CD4-positive, alpha-beta memory T cell (primary cell): ENCODE measurements at regions of chr17 and their contacts with region 1.

Region 1: GRCh38 chr17:45852535-45853297 is 8.0 kb downstream of the SPPL2C start:
- DNase-seq: peak; percentile 41 to 56 (median 49)
- H3K4me3 ChIP-seq: no peak overlapping the region
- H3K4me3 Mint-ChIP-seq: peak overlapping the region in 3 of 8 donors; percentile 10 to 68 (median 21)
- H3K27ac ChIP-seq: no peak overlapping the region
- H3K27ac Mint-ChIP-seq: no peak overlapping the region
- H3K4me1 ChIP-seq: peaks cover 4% of the 10 kb centered on the region
- H3K4me1 Mint-ChIP-seq: peaks cover 0 to 6% (median 2%) of the 10 kb centered on the region in 4 donors
- H3K27me3 ChIP-seq: no peaks in the 10 kb centered on the region
- H3K27me3 Mint-ChIP-seq: peaks cover 16 to 26% of the 10 kb centered on the region in 2 donors

Region 2: DNA sequence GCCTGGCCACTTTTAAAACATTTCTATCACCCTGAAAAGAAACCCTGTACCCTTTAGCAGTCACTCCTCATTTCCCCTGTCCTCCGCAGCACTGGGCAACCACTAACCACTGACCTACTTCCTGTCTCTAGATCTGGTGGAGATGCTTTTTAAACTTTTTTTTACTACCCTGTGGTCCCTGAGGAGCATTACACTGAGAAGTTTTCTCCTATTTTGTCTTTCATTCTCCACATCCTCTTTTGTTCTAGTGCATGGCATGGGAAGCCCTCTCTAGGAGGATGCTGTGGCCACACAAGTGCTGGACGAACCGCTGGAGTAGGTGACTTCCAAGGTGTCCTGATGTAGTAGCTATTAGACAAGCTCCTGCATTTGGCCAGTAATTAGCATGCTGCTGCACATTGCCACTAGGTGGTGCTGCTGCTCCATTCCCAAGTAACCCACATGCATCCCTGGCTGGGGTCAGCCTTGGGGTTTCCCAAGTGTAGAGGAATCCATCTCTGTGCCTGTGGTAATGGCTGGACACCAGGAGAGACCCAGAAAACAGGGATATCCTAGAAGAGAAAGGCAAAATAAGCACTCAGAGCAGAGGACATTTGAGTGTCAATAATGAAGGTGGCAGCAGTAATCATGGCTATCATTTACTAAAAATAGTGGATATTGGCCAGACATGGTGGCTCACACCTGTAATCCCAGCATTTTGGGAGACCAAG is 212.4 kb before region 1 on chr17:
- CTCF ChIA-PET with region 1: interaction called, 7 read pairs
- POLR2A ChIA-PET with region 1: no interaction called
- intact Hi-C with region 1: loop called (anchors 5 kb)
- DNase-seq: peak; percentile 59 to 64 (median 63)
- H3K4me3 ChIP-seq: no peak overlapping the region
- H3K4me3 Mint-ChIP-seq: no peak overlapping the region
- H3K27ac ChIP-seq: no peak overlapping the region
- H3K27ac Mint-ChIP-seq: peak overlapping the region in 3 of 7 donors; percentile 10 to 67 (median 55)
- H3K4me1 ChIP-seq: no peaks in the 10 kb centered on the region
- H3K4me1 Mint-ChIP-seq: peaks cover 6 to 12% (median 6%) of the 10 kb centered on the region in 4 donors
- H3K27me3 ChIP-seq: no peaks in the 10 kb centered on the region
- H3K27me3 Mint-ChIP-seq: no peaks in the 10 kb centered on the region

Region 3: DNA sequence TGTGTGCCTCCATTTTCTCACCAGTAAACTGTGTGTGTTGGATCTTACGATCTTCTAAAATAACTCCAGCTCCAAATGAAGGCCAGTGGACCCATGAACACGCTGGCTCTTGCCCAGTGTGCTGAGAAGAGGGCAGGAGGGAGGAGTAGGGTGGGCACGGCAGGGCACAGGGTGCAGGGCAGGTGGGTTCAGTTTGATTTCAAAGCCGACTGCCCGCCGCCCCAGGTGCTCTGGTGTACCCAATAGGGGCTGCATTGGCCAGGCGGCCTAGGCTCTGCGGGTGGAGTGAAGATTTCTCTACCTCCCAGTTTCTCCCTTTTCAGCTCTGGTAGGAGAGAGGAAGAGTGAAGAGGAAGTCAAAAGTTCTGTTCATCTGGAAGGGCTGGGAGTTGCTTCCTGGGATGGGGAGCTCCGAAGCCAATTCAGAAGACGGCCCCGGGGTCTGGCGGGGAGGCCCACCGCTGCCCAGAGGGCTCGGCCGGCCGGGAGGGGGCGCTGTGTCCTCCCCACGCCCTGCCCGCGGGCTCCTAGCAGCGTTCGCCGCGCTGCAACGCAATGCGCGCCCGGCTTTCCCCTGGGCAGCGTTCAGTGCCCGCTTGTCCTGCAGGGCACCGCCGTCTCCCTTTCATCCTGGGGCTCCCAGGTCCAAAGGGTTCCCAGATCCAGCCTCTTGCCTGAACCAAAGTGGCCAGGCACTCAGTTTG is 69.7 kb before region 1 on chr17:
- CTCF ChIA-PET with region 1: no interaction called
- POLR2A ChIA-PET with region 1: no interaction called
- intact Hi-C with region 1: no loop called
- DNase-seq: peak in 3 of 5 donors; percentile 17 to 25 (median 23)
- H3K4me3 ChIP-seq: no peak overlapping the region
- H3K4me3 Mint-ChIP-seq: peak overlapping the region; percentile 69 to 85 (median 80)
- H3K27ac ChIP-seq: no peak overlapping the region
- H3K27ac Mint-ChIP-seq: no peak overlapping the region
- H3K4me1 ChIP-seq: peaks cover 14% of the 10 kb centered on the region
- H3K4me1 Mint-ChIP-seq: peaks cover 1 to 4% (median 3%) of the 10 kb centered on the region in 4 donors
- H3K27me3 ChIP-seq: peaks cover 4% of the 10 kb centered on the region
- H3K27me3 Mint-ChIP-seq: peaks cover 28 to 42% of the 10 kb centered on the region in 2 donors

Region 4: GRCh38 chr17:45828628-45829027 is 24.1 kb before region 1 on chr17:
- CTCF ChIA-PET with region 1: interaction called, 11 read pairs
- POLR2A ChIA-PET with region 1: no interaction called
- intact Hi-C with region 1: no loop called
- DNase-seq: no peak
- H3K4me3 ChIP-seq: no peak overlapping the region
- H3K4me3 Mint-ChIP-seq: peak overlapping the region in 1 of 8 donors; percentile 33
- H3K27ac ChIP-seq: no peak overlapping the region
- H3K27ac Mint-ChIP-seq: no peak overlapping the region
- H3K4me1 ChIP-seq: peaks cover 4% of the 10 kb centered on the region
- H3K4me1 Mint-ChIP-seq: peaks cover 0 to 15% (median under 1%) of the 10 kb centered on the region in 4 donors
- H3K27me3 ChIP-seq: no peaks in the 10 kb centered on the region
- H3K27me3 Mint-ChIP-seq: peaks cover 1 to 4% of the 10 kb centered on the region in 2 donors

Region 5: GRCh38 chr17:45841186-45841585 is 11.5 kb before region 1 on chr17:
- CTCF ChIA-PET with region 1: interaction called, 10 read pairs
- POLR2A ChIA-PET with region 1: no interaction called
- intact Hi-C with region 1: no loop called
- DNase-seq: no peak
- H3K4me3 ChIP-seq: no peak overlapping the region
- H3K4me3 Mint-ChIP-seq: no peak overlapping the region
- H3K27ac ChIP-seq: no peak overlapping the region
- H3K27ac Mint-ChIP-seq: peak overlapping the region in 1 of 7 donors; percentile 17
- H3K4me1 ChIP-seq: no peaks in the 10 kb centered on the region
- H3K4me1 Mint-ChIP-seq: no peaks in the 10 kb centered on the region
- H3K27me3 ChIP-seq: no peaks in the 10 kb centered on the region
- H3K27me3 Mint-ChIP-seq: peaks cover 0 to 1% of the 10 kb centered on the region in 2 donors

Region 6: GRCh38 chr17:45895304-45895968 is 42.7 kb after region 1 on chr17:
- CTCF ChIA-PET with region 1: interaction called, 4 read pairs
- POLR2A ChIA-PET with region 1: no interaction called
- intact Hi-C with region 1: loop called (anchors 1 kb)
- DNase-seq: peak; percentile 26 to 47 (median 32)
- H3K4me3 ChIP-seq: peak overlapping the region; percentile 47 to 76
- H3K4me3 Mint-ChIP-seq: peak overlapping the region; percentile 87 to 93 (median 88)
- H3K27ac ChIP-seq: no peak overlapping the region
- H3K27ac Mint-ChIP-seq: peak overlapping the region in 3 of 7 donors; percentile 65 to 79 (median 74)
- H3K4me1 ChIP-seq: peaks cover 25% of the 10 kb centered on the region
- H3K4me1 Mint-ChIP-seq: peaks cover 4 to 39% (median 23%) of the 10 kb centered on the region in 4 donors
- H3K27me3 ChIP-seq: peaks cover 34% of the 10 kb centered on the region
- H3K27me3 Mint-ChIP-seq: peaks cover 17 to 30% of the 10 kb centered on the region in 2 donors